Panc1 (cell line): ENCODE measurements at regions of chr10 and their contacts with region 1.

Region 1: GRCh38 chr10:77068969-77069368 is 568.6 kb downstream of the KCNMA1 start:
- DNase-seq: no peak
- ATAC-seq: no peak
- H3K4me3 ChIP-seq: no peak overlapping the region
- H3K27ac ChIP-seq: no peak overlapping the region
- H3K4me1 ChIP-seq: no peaks in the 10 kb centered on the region
- H3K27me3 ChIP-seq: no peaks in the 10 kb centered on the region
- CTCF ChIP-seq: no peak

Region 2: GRCh38 chr10:76523246-76523645 is 545.7 kb before region 1 on chr10:
- CTCF ChIA-PET with region 1: no interaction called
- POLR2A ChIA-PET with region 1: no interaction called
- in situ Hi-C with region 1: no loop called
- intact Hi-C with region 1: no loop called
- DNase-seq: no peak
- ATAC-seq: no peak
- H3K4me3 ChIP-seq: no peak overlapping the region
- H3K27ac ChIP-seq: no peak overlapping the region
- H3K4me1 ChIP-seq: no peaks in the 10 kb centered on the region
- H3K27me3 ChIP-seq: no peaks in the 10 kb centered on the region
- CTCF ChIP-seq: no peak

Region 3: GRCh38 chr10:77026148-77026547 is 42.8 kb before region 1 on chr10:
- CTCF ChIA-PET with region 1: interaction called, 13 read pairs
- POLR2A ChIA-PET with region 1: no interaction called
- in situ Hi-C with region 1: no loop called
- intact Hi-C with region 1: no loop called
- DNase-seq: no peak
- ATAC-seq: no peak
- H3K4me3 ChIP-seq: no peak overlapping the region
- H3K27ac ChIP-seq: no peak overlapping the region
- H3K4me1 ChIP-seq: no peaks in the 10 kb centered on the region
- H3K27me3 ChIP-seq: no peaks in the 10 kb centered on the region
- CTCF ChIP-seq: no peak

Region 4: GRCh38 chr10:77121829-77122228 is 52.9 kb after region 1 on chr10:
- CTCF ChIA-PET with region 1: no interaction called
- POLR2A ChIA-PET with region 1: no interaction called
- in situ Hi-C with region 1: no loop called
- intact Hi-C with region 1: no loop called
- DNase-seq: no peak
- ATAC-seq: no peak
- H3K4me3 ChIP-seq: no peak overlapping the region
- H3K27ac ChIP-seq: no peak overlapping the region
- H3K4me1 ChIP-seq: no peaks in the 10 kb centered on the region
- H3K27me3 ChIP-seq: no peaks in the 10 kb centered on the region
- CTCF ChIP-seq: no peak